HEK293 (cell line): ENCODE measurements at regions of chr1 and their contacts with region 1.

Region 1: GRCh38 chr1:226649780-226650179 is 89.3 kb downstream of the ITPKB start:
- H3K4me3 ChIP-seq: no peak overlapping the region
- H3K27ac ChIP-seq: no peak overlapping the region
- H3K4me1 ChIP-seq: no peaks in the 10 kb centered on the region
- CTCF ChIP-seq: no peak; the same call in none of the 2 replicates

Region 2: GRCh38 chr1:226634166-226634588 is 15.6 kb before region 1 on chr1:
- CTCF ChIA-PET with region 1: interaction called, 12 read pairs
- POLR2A ChIA-PET with region 1: no interaction called
- H3K4me3 ChIP-seq: no peak overlapping the region
- H3K27ac ChIP-seq: no peak overlapping the region
- H3K4me1 ChIP-seq: no peaks in the 10 kb centered on the region
- CTCF ChIP-seq: peak; percentile 97

Region 3: GRCh38 chr1:226679853-226680516 is 30.2 kb after region 1 on chr1:
- CTCF ChIA-PET with region 1: no interaction called
- POLR2A ChIA-PET with region 1: no interaction called
- H3K4me3 ChIP-seq: no peak overlapping the region; the same call in 1 of the 2 replicates
- H3K27ac ChIP-seq: no peak overlapping the region
- H3K4me1 ChIP-seq: peaks cover 8% of the 10 kb centered on the region
- CTCF ChIP-seq: no peak